ENCODE measurements at regions of chr11 and their contacts with region 1.

Region 1: GRCh38 chr11:14308114-14308896 is 50.7 kb downstream of the RRAS2 start:
- DNase-seq: peak in 4 of 5 donors; percentile 20 to 29 (median 24)
- H3K4me3 ChIP-seq: no peak overlapping the region
- H3K4me3 Mint-ChIP-seq: no peak overlapping the region
- H3K27ac ChIP-seq: no peak overlapping the region
- H3K27ac Mint-ChIP-seq: no peak overlapping the region
- H3K4me1 ChIP-seq: peaks cover 23% of the 10 kb centered on the region
- H3K4me1 Mint-ChIP-seq: peaks cover 7 to 12% (median 10%) of the 10 kb centered on the region in 4 donors
- H3K27me3 ChIP-seq: no peaks in the 10 kb centered on the region
- H3K27me3 Mint-ChIP-seq: no peaks in the 10 kb centered on the region

Region 2: GRCh38 chr11:14095882-14096281 is 212.4 kb before region 1 on chr11:
- CTCF ChIA-PET with region 1: no interaction called
- POLR2A ChIA-PET with region 1: no interaction called
- intact Hi-C with region 1: no loop called
- DNase-seq: no peak
- H3K4me3 ChIP-seq: no peak overlapping the region
- H3K4me3 Mint-ChIP-seq: no peak overlapping the region
- H3K27ac ChIP-seq: no peak overlapping the region
- H3K27ac Mint-ChIP-seq: no peak overlapping the region
- H3K4me1 ChIP-seq: no peaks in the 10 kb centered on the region
- H3K4me1 Mint-ChIP-seq: peaks cover 0 to 2% (median 0%) of the 10 kb centered on the region in 4 donors
- H3K27me3 ChIP-seq: no peaks in the 10 kb centered on the region
- H3K27me3 Mint-ChIP-seq: no peaks in the 10 kb centered on the region

Region 3: DNA sequence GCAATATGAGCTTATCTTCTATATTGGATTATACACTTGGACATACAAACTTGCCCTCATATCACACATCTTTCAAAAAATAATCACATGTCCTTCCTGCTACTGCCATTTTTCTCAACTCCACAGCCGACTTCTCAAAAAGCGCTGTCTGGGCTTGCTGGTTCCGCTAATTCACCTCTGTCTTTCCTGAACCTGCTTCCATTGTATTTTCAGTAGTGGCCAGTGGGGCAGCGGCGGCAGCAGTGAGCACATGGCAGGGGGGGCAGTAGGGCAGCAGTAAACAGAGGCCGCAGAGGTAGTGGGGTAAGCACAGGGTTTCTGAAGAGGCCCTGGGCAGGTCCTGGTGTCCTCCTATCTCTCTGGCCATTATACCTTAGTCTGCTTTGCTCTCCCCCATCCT is 75.7 kb before region 1 on chr11:
- CTCF ChIA-PET with region 1: no interaction called
- POLR2A ChIA-PET with region 1: no interaction called
- intact Hi-C with region 1: no loop called
- DNase-seq: no peak
- H3K4me3 ChIP-seq: no peak overlapping the region
- H3K4me3 Mint-ChIP-seq: no peak overlapping the region
- H3K27ac ChIP-seq: no peak overlapping the region
- H3K27ac Mint-ChIP-seq: peak overlapping the region in 1 of 7 donors; percentile 13
- H3K4me1 ChIP-seq: no peaks in the 10 kb centered on the region
- H3K4me1 Mint-ChIP-seq: peaks cover 4 to 7% (median 4%) of the 10 kb centered on the region in 4 donors
- H3K27me3 ChIP-seq: no peaks in the 10 kb centered on the region
- H3K27me3 Mint-ChIP-seq: peaks cover 4 to 5% of the 10 kb centered on the region in 2 donors

Region 4: DNA sequence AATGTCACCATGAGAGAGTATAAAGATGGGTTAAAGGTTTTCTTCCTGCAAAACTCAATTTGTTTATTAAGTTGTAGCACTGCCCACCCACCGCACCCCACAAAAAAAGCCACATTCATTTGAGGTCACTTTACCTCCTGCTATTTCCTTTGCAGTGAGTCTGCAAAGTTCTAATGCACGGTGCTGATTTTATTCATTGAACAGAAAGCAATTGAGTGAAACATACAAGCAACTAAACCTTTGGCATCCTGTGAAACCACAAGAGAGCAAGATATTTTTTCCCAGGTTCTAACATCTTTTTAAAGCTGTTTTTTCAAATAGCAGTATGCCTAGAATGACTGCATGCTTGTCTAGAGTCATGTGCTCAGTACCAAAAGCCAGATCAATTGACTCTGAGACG is 11.7 kb after region 1 on chr11:
- CTCF ChIA-PET with region 1: interaction called, 30 read pairs
- POLR2A ChIA-PET with region 1: no interaction called
- intact Hi-C with region 1: no loop called
- DNase-seq: peak; percentile 58 to 63 (median 60)
- H3K4me3 ChIP-seq: no peak overlapping the region
- H3K4me3 Mint-ChIP-seq: peak overlapping the region in 7 of 8 donors; percentile 0 to 73 (median 64)
- H3K27ac ChIP-seq: no peak overlapping the region
- H3K27ac Mint-ChIP-seq: peak overlapping the region in 5 of 7 donors; percentile 4 to 63 (median 39)
- H3K4me1 ChIP-seq: peaks cover 43% of the 10 kb centered on the region
- H3K4me1 Mint-ChIP-seq: peaks cover 32 to 76% (median 58%) of the 10 kb centered on the region in 4 donors
- H3K27me3 ChIP-seq: no peaks in the 10 kb centered on the region
- H3K27me3 Mint-ChIP-seq: no peaks in the 10 kb centered on the region

Region 5: DNA sequence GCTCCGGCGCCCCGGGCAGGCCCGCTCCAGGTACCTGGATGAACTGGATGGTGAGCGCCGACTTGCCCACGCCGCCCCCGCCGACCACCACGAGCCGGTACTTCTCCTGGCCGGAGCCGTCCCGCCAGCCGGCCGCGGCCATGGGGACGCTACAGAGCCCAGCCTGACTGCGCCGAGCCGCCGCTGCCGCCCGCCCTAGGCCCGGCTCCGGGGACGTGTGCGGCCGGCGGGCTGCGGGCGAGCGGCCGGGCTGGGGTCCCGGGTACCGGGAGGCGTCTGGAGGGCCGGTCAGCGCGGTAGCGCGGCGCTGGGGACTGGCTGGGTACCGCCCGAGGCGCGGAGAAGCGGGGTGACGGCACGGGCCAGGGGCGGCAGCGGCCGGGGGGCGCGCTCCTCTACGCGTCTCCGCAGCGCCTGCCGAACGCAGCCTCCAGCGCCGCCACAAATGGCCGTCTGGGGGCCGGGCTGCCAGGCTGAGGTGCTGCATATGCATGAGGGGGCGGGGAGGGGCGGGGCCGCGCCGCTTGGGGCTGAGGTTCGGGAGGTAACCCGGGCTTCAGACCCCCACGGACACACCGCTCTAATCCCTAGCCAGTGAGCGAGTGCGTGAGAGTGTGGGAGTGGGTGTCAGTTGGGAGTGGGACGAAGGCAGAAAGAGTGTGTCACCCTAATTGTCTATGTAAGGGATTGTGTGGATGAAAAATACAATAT is 50.6 kb after region 1 on chr11 and contains the start of gene RRAS2:
- CTCF ChIA-PET with region 1: interaction called, 5 read pairs
- POLR2A ChIA-PET with region 1: no interaction called
- intact Hi-C with region 1: loop called (anchors 5 kb)
- DNase-seq: peak; percentile 70 to 79 (median 78)
- H3K4me3 ChIP-seq: peak within 1 kb of the TSS; percentile 52 to 66
- H3K4me3 Mint-ChIP-seq: peak within 1 kb of the TSS; percentile 91 to 99 (median 97)
- H3K27ac ChIP-seq: peak within 1 kb of the TSS; percentile 44
- H3K27ac Mint-ChIP-seq: peak within 1 kb of the TSS; percentile 79 to 98 (median 91)
- H3K4me1 ChIP-seq: peaks cover 16% of the 10 kb centered on the region
- H3K4me1 Mint-ChIP-seq: peaks cover 24 to 37% (median 30%) of the 10 kb centered on the region in 4 donors
- H3K27me3 ChIP-seq: no peaks in the 10 kb centered on the region
- H3K27me3 Mint-ChIP-seq: no peaks in the 10 kb centered on the region
- total RNA-seq, gene RRAS2: 11.4 to 11.8 TPM

Region 6: DNA sequence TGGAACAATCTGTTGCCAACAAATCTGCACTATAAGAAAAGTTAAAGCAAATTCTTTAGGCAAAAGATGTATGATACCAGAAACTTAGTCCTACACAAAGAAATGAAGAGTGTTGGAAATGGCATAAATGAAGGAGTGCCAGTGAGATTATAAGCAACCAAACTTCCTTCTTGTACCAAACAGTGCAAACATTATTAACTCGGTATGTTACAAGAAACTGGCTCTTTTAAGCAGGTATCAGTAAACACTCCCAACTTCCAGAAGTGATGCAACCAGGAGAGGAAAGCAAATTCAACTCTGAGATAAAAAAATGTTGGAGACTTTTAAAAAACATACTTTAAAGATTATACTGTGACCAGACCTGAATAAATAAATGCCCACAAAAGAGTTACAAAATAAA is 162.8 kb after region 1 on chr11:
- CTCF ChIA-PET with region 1: no interaction called
- POLR2A ChIA-PET with region 1: no interaction called
- intact Hi-C with region 1: no loop called
- DNase-seq: no peak
- H3K4me3 ChIP-seq: no peak overlapping the region
- H3K4me3 Mint-ChIP-seq: peak overlapping the region in 1 of 8 donors; percentile 54
- H3K27ac ChIP-seq: no peak overlapping the region
- H3K27ac Mint-ChIP-seq: peak overlapping the region in 5 of 7 donors; percentile 25 to 77 (median 67)
- H3K4me1 ChIP-seq: peaks cover 19% of the 10 kb centered on the region
- H3K4me1 Mint-ChIP-seq: peaks cover 37 to 50% (median 41%) of the 10 kb centered on the region in 4 donors
- H3K27me3 ChIP-seq: no peaks in the 10 kb centered on the region
- H3K27me3 Mint-ChIP-seq: no peaks in the 10 kb centered on the region